Prostate gland (tissue), 2 donors: ENCODE measurements at regions of chr7 and their contacts with region 1.

Region 1: DNA sequence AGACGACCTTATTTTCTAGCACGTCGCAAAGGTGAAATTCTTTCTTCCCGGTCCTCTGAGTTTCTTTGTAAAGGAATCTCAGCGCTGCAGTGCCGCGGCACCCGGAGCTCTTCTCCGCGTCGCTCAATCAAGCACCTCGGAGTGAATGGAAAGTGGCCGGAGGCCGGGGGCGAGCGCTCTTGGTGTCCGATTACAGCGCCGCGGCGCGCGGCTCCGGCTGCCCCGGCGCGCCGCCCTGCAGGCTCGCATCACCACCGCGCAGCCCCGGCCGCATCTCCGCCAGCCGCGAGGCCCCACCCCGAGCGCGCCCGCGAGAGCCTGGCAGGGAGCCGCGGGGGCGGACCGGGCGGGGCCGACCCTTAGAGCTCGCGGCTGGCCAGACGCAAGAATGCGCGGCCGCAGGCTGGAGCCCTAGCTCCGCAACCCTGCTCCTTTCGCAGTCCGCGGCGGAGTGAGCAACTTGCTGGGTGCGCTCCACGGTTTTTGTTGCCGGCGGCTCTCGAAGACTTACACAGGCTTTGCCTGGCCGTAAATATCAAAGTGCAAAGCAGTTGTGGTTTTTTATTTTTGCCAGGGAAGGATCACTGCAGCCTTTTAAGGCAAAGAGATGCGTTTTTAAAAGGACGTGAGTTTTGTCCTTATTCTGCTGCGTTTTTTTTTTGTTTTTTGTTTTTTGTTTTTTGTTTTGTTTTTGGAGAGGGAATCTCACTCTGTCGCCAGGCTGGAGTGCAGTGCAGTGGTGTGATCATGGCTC is at the start of gene SEMA3C:
- DNase-seq: peak; percentile 91
- H3K4me3 ChIP-seq: peak within 1 kb of the TSS; percentile 40 to 51
- H3K27ac ChIP-seq: peak within 1 kb of the TSS; percentile 77 to 79
- H3K4me1 ChIP-seq: peaks cover 16% of the 10 kb centered on the region
- H3K27me3 ChIP-seq: no peaks in the 10 kb centered on the region
- CTCF ChIP-seq: peak in 2 of 4 experiments; percentile 6 to 12
- POLR2A ChIP-seq: peak; percentile 70
- total RNA-seq, gene SEMA3C: 66.4 to 147 TPM

Region 2: GRCh38 chr7:80699045-80699638 is 219.9 kb before region 1 on chr7:
- intact Hi-C with region 1: loop called (anchors 5 kb)
- DNase-seq: no peak
- H3K4me3 ChIP-seq: no peak overlapping the region
- H3K27ac ChIP-seq: no peak overlapping the region
- H3K4me1 ChIP-seq: no peaks in the 10 kb centered on the region
- H3K27me3 ChIP-seq: no peaks in the 10 kb centered on the region
- CTCF ChIP-seq: peak in 3 of 4 experiments; percentile 70 to 85 (median 82)
- POLR2A ChIP-seq: no peak

Region 3: GRCh38 chr7:80770675-80771081 is 148.4 kb before region 1 on chr7:
- intact Hi-C with region 1: loop called (anchors 10 kb)
- DNase-seq: no peak
- H3K4me3 ChIP-seq: no peak overlapping the region
- H3K27ac ChIP-seq: no peak overlapping the region
- H3K4me1 ChIP-seq: peaks cover 2% of the 10 kb centered on the region
- H3K27me3 ChIP-seq: no peaks in the 10 kb centered on the region
- CTCF ChIP-seq: no peak
- POLR2A ChIP-seq: no peak

Region 4: DNA sequence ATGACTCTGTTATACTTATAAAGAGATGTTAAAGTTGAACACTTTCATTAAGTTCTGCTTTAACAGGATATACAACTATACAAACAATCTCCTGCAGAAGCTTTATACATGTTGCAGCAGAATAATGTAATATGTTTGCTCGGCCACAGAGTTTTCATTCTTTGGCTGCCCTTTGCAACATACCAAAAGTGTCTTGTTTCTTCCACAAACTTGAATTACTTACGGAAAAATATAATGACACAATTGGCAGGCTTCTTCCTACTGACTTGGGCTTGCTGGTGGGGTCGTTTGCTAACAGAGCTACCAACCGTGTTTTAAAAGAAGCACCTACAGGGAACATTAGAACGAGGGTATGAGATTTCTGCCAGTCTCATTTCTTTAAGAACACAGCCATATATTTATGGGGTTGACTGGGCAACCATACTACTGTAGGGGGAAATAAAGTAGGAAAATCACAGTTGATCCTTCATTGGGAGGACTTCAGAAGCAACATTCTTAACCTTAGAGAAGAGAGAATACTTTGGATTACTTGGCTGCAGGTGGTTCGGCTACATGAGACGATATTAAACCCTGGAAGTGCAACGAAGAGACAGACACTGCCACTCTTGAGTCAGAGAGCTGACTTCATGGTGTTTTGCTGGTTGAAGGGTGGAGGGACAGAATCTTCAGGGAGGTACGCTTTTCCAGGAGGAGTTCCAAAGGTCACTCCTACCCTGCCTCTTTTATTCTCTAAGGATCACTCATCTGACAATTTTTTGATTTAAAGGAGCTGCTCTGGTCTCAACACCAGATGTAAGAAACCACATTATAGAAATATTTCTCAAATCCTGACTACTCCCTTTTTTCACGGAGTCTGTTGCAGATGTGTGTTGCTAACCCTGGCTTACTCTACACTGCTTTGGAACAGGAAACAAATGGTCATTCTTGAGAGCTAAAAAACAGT is 124.2 kb before region 1 on chr7:
- intact Hi-C with region 1: loop called (anchors 5 kb)
- DNase-seq: no peak
- H3K4me3 ChIP-seq: no peak overlapping the region
- H3K27ac ChIP-seq: no peak overlapping the region
- H3K4me1 ChIP-seq: no peaks in the 10 kb centered on the region
- H3K27me3 ChIP-seq: no peaks in the 10 kb centered on the region
- CTCF ChIP-seq: no peak
- POLR2A ChIP-seq: no peak

Region 5: DNA sequence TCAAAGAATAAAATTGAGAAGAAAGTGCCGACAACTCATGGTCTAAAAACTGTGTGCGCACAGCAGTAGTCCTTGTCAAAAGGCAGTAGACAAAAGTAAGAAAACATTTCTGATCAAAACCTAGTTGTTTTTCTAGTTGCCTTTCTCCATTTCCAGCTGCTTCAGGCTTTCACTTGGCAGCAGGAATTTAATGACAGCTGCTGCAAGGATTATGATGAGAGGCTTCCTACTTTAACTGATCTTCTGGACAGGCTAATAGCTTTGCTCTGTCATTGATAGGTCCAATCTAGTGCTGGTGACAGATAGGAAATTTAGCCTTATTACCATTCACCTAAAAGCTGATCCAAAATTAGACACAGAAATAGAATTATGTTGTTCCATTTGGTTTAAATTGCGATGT is 110.4 kb after region 1 on chr7:
- intact Hi-C with region 1: no loop called
- DNase-seq: no peak
- H3K4me3 ChIP-seq: no peak overlapping the region
- H3K27ac ChIP-seq: no peak overlapping the region
- H3K4me1 ChIP-seq: no peaks in the 10 kb centered on the region
- H3K27me3 ChIP-seq: no peaks in the 10 kb centered on the region
- CTCF ChIP-seq: no peak
- POLR2A ChIP-seq: no peak

Region 6: GRCh38 chr7:81469869-81470723 is 551.0 kb after region 1 on chr7:
- intact Hi-C with region 1: loop called (anchors 5 kb)
- DNase-seq: peak; percentile 56
- H3K4me3 ChIP-seq: no peak overlapping the region
- H3K27ac ChIP-seq: no peak overlapping the region
- H3K4me1 ChIP-seq: no peaks in the 10 kb centered on the region
- H3K27me3 ChIP-seq: no peaks in the 10 kb centered on the region
- CTCF ChIP-seq: peak; percentile 28 to 73 (median 59)
- POLR2A ChIP-seq: no peak